Activated CD4-positive, alpha-beta memory T cell treated with anti-CD3 and anti-CD28 coated beads for 36 hours (primary cell): ENCODE measurements at regions of chr11 and their contacts with region 1.

Region 1: GRCh38 chr11:102341844-102342318 is 5.1 kb upstream of the BIRC2 start:
- DNase-seq: peak; percentile 78
- H3K4me3 Mint-ChIP-seq: no peak overlapping the region
- H3K27ac Mint-ChIP-seq: peak overlapping the region; percentile 19
- H3K4me1 Mint-ChIP-seq: peaks cover 52% of the 10 kb centered on the region
- H3K27me3 Mint-ChIP-seq: no peaks in the 10 kb centered on the region

Region 2: GRCh38 chr11:102287964-102288724 is 53.7 kb before region 1 on chr11:
- CTCF ChIA-PET with region 1: interaction called, 103 read pairs
- POLR2A ChIA-PET with region 1: no interaction called
- intact Hi-C with region 1: loop called (anchors 1 kb)
- DNase-seq: peak; percentile 33
- H3K4me3 Mint-ChIP-seq: peak overlapping the region; percentile 38
- H3K27ac Mint-ChIP-seq: no peak overlapping the region
- H3K4me1 Mint-ChIP-seq: peaks cover 25% of the 10 kb centered on the region
- H3K27me3 Mint-ChIP-seq: no peaks in the 10 kb centered on the region

Region 3: GRCh38 chr11:102317099-102317767 is 24.6 kb before region 1 on chr11 and contains the start of gene BIRC3:
- CTCF ChIA-PET with region 1: interaction called, 52 read pairs
- POLR2A ChIA-PET with region 1: interaction called, 8 read pairs
- intact Hi-C with region 1: loop called (anchors 1 kb)
- DNase-seq: peak; percentile 96
- H3K4me3 Mint-ChIP-seq: peak within 1 kb of the TSS; percentile 95
- H3K27ac Mint-ChIP-seq: peak within 1 kb of the TSS; percentile 100
- H3K4me1 Mint-ChIP-seq: peaks cover 56% of the 10 kb centered on the region
- H3K27me3 Mint-ChIP-seq: no peaks in the 10 kb centered on the region
- total RNA-seq, gene BIRC3: 135 to 139 TPM

Region 4: DNA sequence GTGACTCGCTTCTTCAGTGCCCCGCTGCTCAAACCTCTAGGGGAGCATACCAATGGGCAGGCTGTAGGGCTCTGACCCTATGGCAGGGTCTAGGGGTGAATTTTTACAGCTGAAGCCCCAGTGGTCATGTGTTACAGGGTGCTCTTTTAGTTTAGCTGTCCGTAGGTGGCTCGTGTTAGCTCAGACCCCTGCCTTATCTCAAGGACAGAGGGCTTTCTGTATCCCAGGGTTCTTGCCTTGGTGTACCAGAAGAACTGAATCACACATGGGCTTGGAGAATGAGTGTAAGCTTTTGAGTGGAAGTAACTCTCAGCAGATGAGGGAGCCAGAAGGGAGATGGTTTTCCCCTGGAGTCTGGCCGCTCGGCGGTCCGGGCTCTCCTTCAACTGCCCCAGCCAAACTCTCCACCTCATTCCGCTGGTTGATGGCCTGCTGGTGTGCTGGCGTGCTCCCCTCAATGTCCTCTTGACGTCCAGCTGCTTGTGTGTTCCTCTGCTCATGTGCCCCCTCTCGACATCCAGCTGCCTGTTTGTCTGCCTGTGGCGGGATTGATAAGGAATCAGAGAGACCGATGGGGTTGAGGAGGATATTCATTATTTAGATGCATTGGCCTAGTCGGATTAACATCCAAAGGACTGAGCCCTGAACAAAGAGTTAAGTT is 42.7 kb after region 1 on chr11:
- CTCF ChIA-PET with region 1: no interaction called
- POLR2A ChIA-PET with region 1: no interaction called
- intact Hi-C with region 1: no loop called
- DNase-seq: no peak
- H3K4me3 Mint-ChIP-seq: no peak overlapping the region
- H3K27ac Mint-ChIP-seq: no peak overlapping the region
- H3K4me1 Mint-ChIP-seq: peaks cover 20% of the 10 kb centered on the region
- H3K27me3 Mint-ChIP-seq: no peaks in the 10 kb centered on the region

Region 5: DNA sequence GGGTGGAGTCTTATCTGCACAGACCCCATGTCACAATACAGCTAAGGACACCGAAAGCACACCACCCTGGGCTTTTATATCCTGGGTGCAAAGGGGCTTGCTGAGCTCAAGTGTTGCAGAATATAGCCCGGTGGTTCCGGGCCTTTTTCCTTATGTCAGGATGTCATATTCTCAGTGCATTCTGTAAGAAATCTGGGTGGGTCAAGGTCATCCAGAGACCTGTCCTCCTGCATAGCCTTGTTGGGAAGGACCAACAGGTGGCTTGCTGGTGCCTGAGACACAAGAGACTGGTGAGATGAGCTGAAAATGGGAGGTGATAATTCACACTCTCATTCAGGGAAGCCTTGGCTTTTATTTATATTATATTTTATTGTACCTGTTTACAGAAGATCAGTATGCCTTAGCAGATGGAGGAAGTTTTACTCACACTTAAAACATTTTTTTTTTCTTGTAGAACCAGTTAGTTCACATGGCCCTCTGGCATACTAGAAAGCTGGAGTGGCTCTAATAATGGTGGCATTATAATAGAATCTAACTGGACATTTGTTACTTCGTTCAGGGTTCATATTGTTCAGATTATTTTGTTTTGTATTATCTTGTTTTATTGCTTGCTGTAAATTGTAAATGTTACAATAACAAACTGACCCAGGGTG is 125.3 kb after region 1 on chr11:
- CTCF ChIA-PET with region 1: interaction called, 11 read pairs
- POLR2A ChIA-PET with region 1: no interaction called
- intact Hi-C with region 1: no loop called
- DNase-seq: no peak
- H3K4me3 Mint-ChIP-seq: no peak overlapping the region
- H3K27ac Mint-ChIP-seq: no peak overlapping the region
- H3K4me1 Mint-ChIP-seq: peaks cover 72% of the 10 kb centered on the region
- H3K27me3 Mint-ChIP-seq: no peaks in the 10 kb centered on the region

Region 6: DNA sequence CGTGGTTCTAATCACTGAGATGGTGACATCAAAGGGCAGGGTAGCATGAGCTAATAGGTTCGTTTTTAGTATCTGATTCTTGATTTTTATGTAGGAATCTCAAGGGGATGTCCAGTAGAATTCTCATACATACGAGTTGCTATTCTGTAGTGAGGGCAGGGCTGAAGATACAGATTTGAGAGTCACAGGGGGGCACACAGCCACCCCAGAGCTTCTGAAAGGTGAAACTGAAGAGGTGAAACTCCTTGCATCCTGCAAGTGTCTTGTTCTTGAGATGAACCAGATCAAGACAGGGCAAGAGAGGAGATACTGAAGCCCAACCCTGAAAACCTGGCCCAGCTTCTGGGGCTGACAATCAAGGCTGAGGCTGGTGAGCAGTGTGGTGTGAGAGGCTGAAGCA is 146.3 kb after region 1 on chr11:
- CTCF ChIA-PET with region 1: interaction called, 13 read pairs
- POLR2A ChIA-PET with region 1: no interaction called
- intact Hi-C with region 1: no loop called
- DNase-seq: no peak
- H3K4me3 Mint-ChIP-seq: no peak overlapping the region
- H3K27ac Mint-ChIP-seq: peak overlapping the region; percentile 16
- H3K4me1 Mint-ChIP-seq: peaks cover 32% of the 10 kb centered on the region
- H3K27me3 Mint-ChIP-seq: no peaks in the 10 kb centered on the region

Region 7: DNA sequence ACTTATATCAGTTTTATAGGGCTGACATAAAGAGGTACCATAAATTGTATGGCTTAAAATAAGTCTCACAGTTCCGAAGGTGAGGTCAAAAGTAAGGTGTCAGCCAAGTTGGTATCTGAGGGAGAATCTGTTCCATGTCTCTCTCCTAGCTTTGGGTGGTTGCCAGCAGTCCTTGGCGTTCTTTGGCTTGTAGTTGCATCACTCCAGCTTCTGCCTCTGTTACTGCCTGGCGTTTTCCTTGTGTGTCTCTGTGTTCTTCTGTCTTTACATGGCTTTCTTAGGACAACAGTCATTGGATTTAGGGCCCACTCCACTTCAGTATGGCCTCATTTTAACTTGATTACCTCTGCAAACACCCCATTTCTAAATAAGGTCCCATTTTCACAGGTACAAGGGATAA is 172.0 kb after region 1 on chr11:
- CTCF ChIA-PET with region 1: interaction called, 12 read pairs
- POLR2A ChIA-PET with region 1: no interaction called
- intact Hi-C with region 1: no loop called
- DNase-seq: no peak
- H3K4me3 Mint-ChIP-seq: no peak overlapping the region
- H3K27ac Mint-ChIP-seq: no peak overlapping the region
- H3K4me1 Mint-ChIP-seq: no peaks in the 10 kb centered on the region
- H3K27me3 Mint-ChIP-seq: no peaks in the 10 kb centered on the region

Region 8: GRCh38 chr11:102666331-102666957 is 324.6 kb after region 1 on chr11:
- CTCF ChIA-PET with region 1: interaction called, 64 read pairs
- POLR2A ChIA-PET with region 1: no interaction called
- intact Hi-C with region 1: loop called (anchors 1 kb)
- DNase-seq: peak; percentile 15
- H3K4me3 Mint-ChIP-seq: no peak overlapping the region
- H3K27ac Mint-ChIP-seq: no peak overlapping the region
- H3K4me1 Mint-ChIP-seq: no peaks in the 10 kb centered on the region
- H3K27me3 Mint-ChIP-seq: no peaks in the 10 kb centered on the region